AG04449 (cell line): ENCODE measurements at regions of chr11 and their contacts with region 1.

Region 1: DNA sequence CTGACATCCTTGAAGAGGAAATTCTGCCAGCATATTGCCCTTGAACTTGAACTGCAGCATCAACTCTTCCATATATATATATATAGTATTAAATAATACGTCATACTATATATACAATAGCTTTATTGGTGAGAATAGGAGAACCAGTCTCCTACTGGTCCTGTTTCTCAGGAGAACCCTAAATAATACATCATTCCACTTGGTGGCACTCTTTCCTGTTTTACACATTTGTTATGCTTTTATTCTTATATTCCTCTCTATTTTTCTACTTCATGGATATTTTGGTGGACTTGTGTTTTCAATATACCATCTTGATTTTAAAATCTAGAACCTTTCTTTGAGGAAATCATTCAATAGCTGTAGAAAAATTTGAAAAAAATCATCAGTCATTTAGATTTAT is 193.3 kb downstream of the TRPC6 start:
- DNase-seq: no peak
- H3K4me3 ChIP-seq: no peak overlapping the region
- CTCF ChIP-seq: no peak

Region 2: GRCh38 chr11:101407324-101407723 is 16.8 kb after region 1 on chr11:
- CTCF ChIA-PET with region 1: no interaction called
- POLR2A ChIA-PET with region 1: no interaction called
- DNase-seq: no peak
- H3K4me3 ChIP-seq: no peak overlapping the region
- CTCF ChIP-seq: no peak

Region 3: GRCh38 chr11:101436511-101437142 is 46.1 kb after region 1 on chr11:
- CTCF ChIA-PET with region 1: interaction called, 10 read pairs
- POLR2A ChIA-PET with region 1: no interaction called
- DNase-seq: no peak
- H3K4me3 ChIP-seq: no peak overlapping the region
- CTCF ChIP-seq: peak; percentile 71